Activated naive CD8-positive, alpha-beta T cell treated with anti-CD3 and anti-CD28 coated beads, Interleukin-2, amount 10 ng/mL, durations not matched to agents 7 days and 5 days (primary cell): ENCODE measurements at regions of chr14 and their contacts with region 1.

Region 1: GRCh38 chr14:101774006-101774795 is 12.7 kb downstream of the PPP2R5C start:
- DNase-seq: no peak
- ATAC-seq: no peak
- H3K4me3 Mint-ChIP-seq: no peak overlapping the region
- H3K27ac Mint-ChIP-seq: no peak overlapping the region
- H3K4me1 Mint-ChIP-seq: peaks cover 5% of the 10 kb centered on the region
- H3K27me3 Mint-ChIP-seq: peaks cover 4% of the 10 kb centered on the region

Region 2: GRCh38 chr14:101823511-101824120 is 49.4 kb after region 1 on chr14:
- POLR2A ChIA-PET with region 1: interaction called, 11 read pairs
- DNase-seq: peak; percentile 58
- ATAC-seq: peak; percentile 57
- H3K4me3 Mint-ChIP-seq: peak overlapping the region; percentile 86
- H3K27ac Mint-ChIP-seq: peak overlapping the region; percentile 99
- H3K4me1 Mint-ChIP-seq: peaks cover 77% of the 10 kb centered on the region
- H3K27me3 Mint-ChIP-seq: no peaks in the 10 kb centered on the region